Activated CD4-positive, alpha-beta T cell treated with anti-CD3 and anti-CD28 coated beads for 36 hours (primary cell): ENCODE measurements at regions of chr4 and their contacts with region 1.

Region 1: DNA sequence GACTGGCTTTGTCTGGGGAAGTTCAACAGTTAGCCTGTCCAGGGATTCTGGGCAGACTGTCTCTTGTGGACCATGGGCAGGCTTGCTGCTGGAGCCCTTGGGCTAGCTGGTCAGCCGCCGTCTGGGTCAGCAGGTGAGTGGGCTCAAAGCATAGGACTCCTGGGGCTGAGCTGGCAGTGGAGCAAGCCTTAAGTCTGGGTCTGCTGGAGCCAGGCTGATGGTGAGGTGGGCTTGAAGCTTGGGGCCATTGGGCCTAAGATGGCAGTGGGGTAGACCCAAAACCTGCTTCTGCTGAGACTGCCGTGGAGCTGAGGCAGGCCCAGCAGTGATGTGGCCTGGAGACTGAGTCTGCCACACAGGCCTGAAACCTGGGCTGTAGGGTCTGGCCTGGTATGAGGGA is 645.1 kb downstream of the RAPGEF2 start:
- DNase-seq: no peak
- ATAC-seq: no peak
- H3K4me3 Mint-ChIP-seq: no peak overlapping the region
- H3K27ac Mint-ChIP-seq: no peak overlapping the region
- H3K4me1 Mint-ChIP-seq: no peaks in the 10 kb centered on the region
- H3K27me3 Mint-ChIP-seq: no peaks in the 10 kb centered on the region

Region 2: GRCh38 chr4:159684534-159684933 is 63.4 kb before region 1 on chr4:
- CTCF ChIA-PET with region 1: no interaction called
- POLR2A ChIA-PET with region 1: interaction called, 17 read pairs
- intact Hi-C with region 1: no loop called
- DNase-seq: no peak
- ATAC-seq: no peak
- H3K4me3 Mint-ChIP-seq: no peak overlapping the region
- H3K27ac Mint-ChIP-seq: no peak overlapping the region
- H3K4me1 Mint-ChIP-seq: no peaks in the 10 kb centered on the region
- H3K27me3 Mint-ChIP-seq: no peaks in the 10 kb centered on the region

Region 3: GRCh38 chr4:159764343-159764952 is 16.5 kb after region 1 on chr4:
- CTCF ChIA-PET with region 1: no interaction called
- POLR2A ChIA-PET with region 1: no interaction called
- intact Hi-C with region 1: no loop called
- DNase-seq: no peak
- ATAC-seq: no peak
- H3K4me3 Mint-ChIP-seq: no peak overlapping the region
- H3K27ac Mint-ChIP-seq: no peak overlapping the region
- H3K4me1 Mint-ChIP-seq: no peaks in the 10 kb centered on the region
- H3K27me3 Mint-ChIP-seq: no peaks in the 10 kb centered on the region